ENCODE measurements at regions of chr12 and their contacts with region 1.

Region 1: GRCh38 chr12:103868215-103868614 is 27.2 kb upstream of the NT5DC3 start:
- DNase-seq: no peak
- ATAC-seq: no peak
- H3K4me3 ChIP-seq: no peak overlapping the region
- H3K4me3 Mint-ChIP-seq: no peak overlapping the region
- H3K27ac ChIP-seq: no peak overlapping the region
- H3K27ac Mint-ChIP-seq: no peak overlapping the region
- H3K4me1 ChIP-seq: no peaks in the 10 kb centered on the region
- H3K4me1 Mint-ChIP-seq: no peaks in the 10 kb centered on the region
- H3K27me3 ChIP-seq: no peaks in the 10 kb centered on the region
- H3K27me3 Mint-ChIP-seq: no peaks in the 10 kb centered on the region
- CTCF ChIP-seq: no peak

Region 2: DNA sequence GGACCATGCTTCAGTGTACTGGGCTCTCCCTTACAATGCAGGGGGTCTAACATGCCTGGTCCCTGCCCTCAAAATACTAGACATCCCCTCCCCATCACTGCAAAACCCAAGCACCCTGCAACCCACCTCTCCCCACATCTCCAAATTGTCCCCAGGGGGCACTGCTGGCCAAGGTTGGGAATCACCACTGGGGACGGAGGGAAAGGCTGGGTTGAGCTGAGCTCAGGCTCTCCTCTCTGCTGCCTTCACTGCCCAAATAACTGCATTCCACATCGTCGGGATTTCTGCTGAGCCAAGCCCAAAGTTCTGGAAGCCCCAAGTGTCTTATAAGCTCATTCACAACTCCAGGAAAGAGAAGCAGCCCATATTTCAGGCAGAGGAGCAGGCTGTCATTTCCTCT is 96.7 kb before region 1 on chr12:
- CTCF ChIA-PET with region 1: interaction called, 4 read pairs
- POLR2A ChIA-PET with region 1: no interaction called
- intact Hi-C with region 1: loop called (anchors 1 kb)
- DNase-seq: peak; percentile 38
- ATAC-seq: peak; percentile 51
- H3K4me3 ChIP-seq: no peak overlapping the region
- H3K4me3 Mint-ChIP-seq: no peak overlapping the region
- H3K27ac ChIP-seq: no peak overlapping the region
- H3K27ac Mint-ChIP-seq: no peak overlapping the region
- H3K4me1 ChIP-seq: no peaks in the 10 kb centered on the region
- H3K4me1 Mint-ChIP-seq: no peaks in the 10 kb centered on the region
- H3K27me3 ChIP-seq: no peaks in the 10 kb centered on the region
- H3K27me3 Mint-ChIP-seq: no peaks in the 10 kb centered on the region
- CTCF ChIP-seq: peak; percentile 35

Measured in B cell (primary cell).